Activated CD4-positive, alpha-beta T cell treated with anti-CD3 and anti-CD28 coated beads for 36 hours (primary cell): ENCODE measurements at regions of chr9 and their contacts with region 1.

Region 1: DNA sequence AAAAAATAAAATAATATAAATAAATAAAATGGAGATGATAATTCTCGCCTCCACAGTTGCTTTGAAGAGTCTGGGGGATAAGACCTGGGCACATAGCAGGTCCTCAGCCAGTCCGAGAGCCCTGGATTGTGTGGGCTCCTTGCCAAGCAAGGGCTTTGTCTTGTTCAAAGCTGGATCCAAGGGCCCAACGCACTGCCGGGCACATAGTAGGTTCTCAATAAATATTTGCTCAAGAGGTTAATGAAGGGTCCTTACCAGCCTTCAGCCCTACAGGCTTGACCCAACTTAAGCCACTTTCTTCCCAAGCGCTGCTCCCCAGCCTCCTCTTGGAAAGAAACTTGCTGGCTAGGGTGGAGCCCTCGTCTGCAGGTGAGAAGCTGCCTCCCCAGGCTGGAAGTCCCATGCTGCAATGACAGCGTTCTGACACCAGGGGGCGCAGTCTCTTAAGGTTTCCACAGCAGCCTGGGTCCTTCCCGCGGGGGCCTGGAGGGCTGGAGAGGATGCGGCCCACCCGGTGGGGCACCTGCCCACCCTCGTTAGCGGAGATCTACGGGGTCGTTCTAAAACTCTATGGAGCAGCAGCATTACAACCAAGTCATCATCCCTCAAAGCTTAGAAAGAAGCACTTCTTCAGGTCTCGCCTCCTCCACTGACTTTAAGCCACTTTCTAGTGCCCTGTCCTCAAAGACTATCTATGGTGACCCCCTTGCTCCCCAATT is 115.2 kb downstream of the LHX2 start:
- DNase-seq: peak; percentile 88
- ATAC-seq: peak; percentile 65
- H3K4me3 Mint-ChIP-seq: no peak overlapping the region
- H3K27ac Mint-ChIP-seq: no peak overlapping the region
- H3K4me1 Mint-ChIP-seq: no peaks in the 10 kb centered on the region
- H3K27me3 Mint-ChIP-seq: peaks cover 5% of the 10 kb centered on the region

Region 2: GRCh38 chr9:124140941-124141568 is 14.3 kb after region 1 on chr9:
- CTCF ChIA-PET with region 1: interaction called, 12 read pairs
- POLR2A ChIA-PET with region 1: no interaction called
- intact Hi-C with region 1: no loop called
- DNase-seq: no peak
- ATAC-seq: no peak
- H3K4me3 Mint-ChIP-seq: no peak overlapping the region
- H3K27ac Mint-ChIP-seq: no peak overlapping the region
- H3K4me1 Mint-ChIP-seq: peaks cover 5% of the 10 kb centered on the region
- H3K27me3 Mint-ChIP-seq: peaks cover under 1% of the 10 kb centered on the region

Region 3: GRCh38 chr9:124291801-124292396 is 165.2 kb after region 1 on chr9:
- CTCF ChIA-PET with region 1: interaction called, 4 read pairs
- POLR2A ChIA-PET with region 1: no interaction called
- intact Hi-C with region 1: loop called in 1 of 2 experiments (anchors 10 kb)
- DNase-seq: peak; percentile 71
- ATAC-seq: peak; percentile 79
- H3K4me3 Mint-ChIP-seq: peak overlapping the region; percentile 18
- H3K27ac Mint-ChIP-seq: no peak overlapping the region
- H3K4me1 Mint-ChIP-seq: peaks cover 42% of the 10 kb centered on the region
- H3K27me3 Mint-ChIP-seq: peaks cover 9% of the 10 kb centered on the region

Region 4: GRCh38 chr9:124386201-124386600 is 259.5 kb after region 1 on chr9:
- CTCF ChIA-PET with region 1: interaction called, 5 read pairs
- POLR2A ChIA-PET with region 1: no interaction called
- intact Hi-C with region 1: loop called (anchors 2 to 5 kb)
- DNase-seq: no peak
- ATAC-seq: no peak
- H3K4me3 Mint-ChIP-seq: no peak overlapping the region
- H3K27ac Mint-ChIP-seq: no peak overlapping the region
- H3K4me1 Mint-ChIP-seq: peaks cover 45% of the 10 kb centered on the region
- H3K27me3 Mint-ChIP-seq: no peaks in the 10 kb centered on the region

Region 5: DNA sequence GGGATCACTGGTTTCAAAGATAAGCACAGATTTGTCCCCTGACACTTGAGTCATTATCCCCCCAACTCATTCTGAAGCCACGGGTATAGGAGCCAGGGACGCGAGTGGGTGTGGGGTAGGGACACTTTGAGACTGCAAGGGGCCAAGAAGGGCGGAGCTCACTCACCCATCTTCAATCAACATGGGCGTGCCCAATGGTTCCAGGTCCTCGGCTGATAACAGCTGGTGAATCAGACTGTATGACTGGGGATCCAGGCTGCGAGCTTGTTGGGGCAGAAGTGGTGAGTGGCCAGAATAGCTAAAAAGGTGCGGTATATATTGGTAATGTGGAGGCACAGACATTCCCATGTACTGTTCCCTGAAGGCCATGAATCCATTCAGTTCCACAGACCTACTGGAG is 411.2 kb after region 1 on chr9:
- CTCF ChIA-PET with region 1: interaction called, 4 read pairs
- POLR2A ChIA-PET with region 1: no interaction called
- intact Hi-C with region 1: loop called in 1 of 2 experiments (anchors 1 kb)
- DNase-seq: no peak
- ATAC-seq: no peak
- H3K4me3 Mint-ChIP-seq: no peak overlapping the region
- H3K27ac Mint-ChIP-seq: no peak overlapping the region
- H3K4me1 Mint-ChIP-seq: no peaks in the 10 kb centered on the region
- H3K27me3 Mint-ChIP-seq: no peaks in the 10 kb centered on the region